Colonic mucosa (tissue), 4 donors: ENCODE measurements at regions of chr6 and their contacts with region 1.

Region 1: GRCh38 chr6:132391391-132392271 is 9.6 kb downstream of the MOXD1 start:
- DNase-seq: peak; percentile 23
- H3K4me3 ChIP-seq: no peak overlapping the region
- H3K27ac ChIP-seq: no peak overlapping the region
- H3K4me1 ChIP-seq: no peaks in the 10 kb centered on the region
- H3K27me3 ChIP-seq: no peaks in the 10 kb centered on the region
- CTCF ChIP-seq: no peak

Region 2: GRCh38 chr6:131348319-131348971 is 1043.2 kb before region 1 on chr6:
- intact Hi-C with region 1: no loop called
- DNase-seq: no peak
- H3K4me3 ChIP-seq: no peak overlapping the region
- H3K27ac ChIP-seq: no peak overlapping the region
- H3K4me1 ChIP-seq: no peaks in the 10 kb centered on the region
- H3K27me3 ChIP-seq: no peaks in the 10 kb centered on the region
- CTCF ChIP-seq: no peak

Region 3: DNA sequence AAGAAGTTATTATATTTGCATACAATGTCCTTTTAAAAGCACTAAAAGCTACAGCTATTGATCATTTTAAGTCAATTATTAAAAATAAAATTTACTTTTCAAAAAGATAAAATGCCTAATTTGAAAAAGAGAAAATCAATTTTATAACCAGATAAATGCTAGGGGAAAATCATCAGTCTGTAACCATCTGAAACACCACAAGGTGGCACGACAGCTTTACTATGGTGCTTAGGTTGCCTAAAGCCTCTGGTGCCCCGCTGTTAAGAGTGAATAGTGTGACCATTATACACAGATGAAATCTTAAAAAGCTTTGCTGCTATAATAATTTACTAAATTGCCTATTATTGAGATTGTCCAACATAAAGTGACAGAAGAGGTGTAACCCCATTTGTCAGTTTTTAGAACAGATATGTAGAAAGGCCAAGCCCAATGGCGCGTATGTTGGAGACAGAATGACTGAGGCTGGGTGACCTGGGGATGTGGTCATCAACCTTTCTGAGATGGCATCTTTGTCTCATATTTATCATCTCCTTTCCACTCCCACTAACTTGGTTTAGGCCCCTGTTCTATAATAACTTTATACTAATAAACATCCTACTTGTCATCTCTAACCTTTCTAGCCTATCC is 91.2 kb before region 1 on chr6:
- intact Hi-C with region 1: loop called (anchors 10 kb)
- DNase-seq: peak; percentile 29
- H3K4me3 ChIP-seq: no peak overlapping the region
- H3K27ac ChIP-seq: no peak overlapping the region
- H3K4me1 ChIP-seq: no peaks in the 10 kb centered on the region
- H3K27me3 ChIP-seq: no peaks in the 10 kb centered on the region
- CTCF ChIP-seq: peak; percentile 49

Region 4: GRCh38 chr6:132643547-132643946 is 251.9 kb after region 1 on chr6:
- intact Hi-C with region 1: no loop called
- DNase-seq: no peak
- H3K4me3 ChIP-seq: no peak overlapping the region
- H3K27ac ChIP-seq: no peak overlapping the region
- H3K4me1 ChIP-seq: no peaks in the 10 kb centered on the region
- H3K27me3 ChIP-seq: no peaks in the 10 kb centered on the region
- CTCF ChIP-seq: no peak